ENCODE measurements at regions of chr13 and their contacts with region 1.

Region 1: DNA sequence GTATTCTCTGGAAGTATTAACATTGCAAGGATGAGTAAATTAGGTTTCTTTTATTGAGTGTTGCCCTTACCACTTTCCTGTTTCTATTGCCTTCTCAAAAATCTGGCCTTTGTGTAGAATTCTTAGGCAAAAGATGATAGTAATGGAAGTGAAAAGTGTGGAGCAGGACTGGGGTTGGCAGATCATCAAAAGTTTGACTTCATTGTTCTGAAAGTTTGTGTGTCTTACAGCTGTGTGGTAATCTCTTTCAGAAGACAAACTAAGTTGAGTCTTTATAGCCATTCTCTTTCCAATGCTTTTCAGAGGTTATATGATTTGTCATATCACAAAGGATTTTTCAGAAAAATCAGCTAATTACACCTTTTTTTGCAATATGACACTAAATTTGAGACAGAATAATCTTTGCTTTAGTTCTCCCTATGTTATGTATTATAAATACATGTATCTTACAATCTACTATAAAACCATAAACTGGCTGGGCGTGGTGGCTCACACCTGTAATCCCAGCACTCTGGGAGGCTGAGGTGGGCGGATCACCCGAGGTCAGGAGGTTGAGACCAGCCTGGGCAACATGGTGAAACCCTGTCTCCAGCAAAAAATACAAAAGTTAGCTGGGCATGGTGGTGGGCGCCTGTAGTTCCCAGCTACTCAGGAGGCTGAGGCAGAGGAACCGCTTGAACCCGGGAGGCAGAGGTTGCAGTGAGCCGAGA is 8.7 kb upstream of the KCNRG start:
- DNase-seq: no peak
- ATAC-seq: no peak
- H3K4me3 ChIP-seq: no peak overlapping the region
- H3K27ac ChIP-seq: peak overlapping the region in 1 of 4 donors; percentile 27
- H3K4me1 ChIP-seq: peaks cover 18 to 21% of the 10 kb centered on the region in 2 donors
- H3K27me3 ChIP-seq: no peaks in the 10 kb centered on the region
- CTCF ChIP-seq: no peak
- POLR2A ChIP-seq: no peak

Region 2: GRCh38 chr13:49936085-49936940 is 70.3 kb before region 1 on chr13 and contains the start of gene SPRYD7:
- in situ Hi-C with region 1: no loop called
- intact Hi-C with region 1: no loop called
- DNase-seq: peak; percentile 96 to 98
- ATAC-seq: peak; percentile 92 to 93
- H3K4me3 ChIP-seq: peak within 1 kb of the TSS; percentile 80 to 98 (median 88)
- H3K27ac ChIP-seq: peak within 1 kb of the TSS; percentile 87 to 95 (median 92)
- H3K4me1 ChIP-seq: peaks cover 49 to 54% of the 10 kb centered on the region in 2 donors
- H3K27me3 ChIP-seq: no peaks in the 10 kb centered on the region
- CTCF ChIP-seq: peak; percentile 88 to 95 (median 93)
- POLR2A ChIP-seq: peak; percentile 77 to 83
- total RNA-seq, gene SPRYD7: 9.8 to 24.7 (median 17.9) TPM

Region 3: DNA sequence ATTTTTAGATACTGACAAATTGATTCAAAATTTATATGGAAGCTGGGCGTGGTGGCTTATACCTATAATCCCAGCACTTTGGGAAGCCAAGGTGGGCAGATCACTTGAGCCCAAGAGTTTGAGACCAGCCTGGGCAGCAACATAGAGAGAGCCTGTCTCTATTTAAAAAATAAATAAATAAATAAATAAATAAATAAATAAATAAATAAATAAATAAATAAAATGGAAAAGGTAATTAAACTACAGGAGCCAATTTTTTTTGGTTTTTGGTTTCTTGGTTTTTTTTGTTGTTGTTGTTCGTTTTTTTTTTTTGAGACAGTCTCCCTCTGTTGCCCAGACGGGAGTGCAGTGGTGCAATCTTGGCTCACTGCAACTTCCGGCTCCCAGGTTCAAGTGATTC is 39.1 kb before region 1 on chr13:
- in situ Hi-C with region 1: no loop called
- intact Hi-C with region 1: no loop called
- DNase-seq: no peak
- ATAC-seq: no peak
- H3K4me3 ChIP-seq: no peak overlapping the region
- H3K27ac ChIP-seq: no peak overlapping the region
- H3K4me1 ChIP-seq: no peaks in the 10 kb centered on the region
- H3K27me3 ChIP-seq: no peaks in the 10 kb centered on the region
- CTCF ChIP-seq: no peak
- POLR2A ChIP-seq: no peak

Region 4: GRCh38 chr13:50075619-50076097 is 69.1 kb after region 1 on chr13:
- in situ Hi-C with region 1: loop called in 1 of 4 experiments (anchors 10 kb)
- intact Hi-C with region 1: no loop called
- DNase-seq: no peak
- ATAC-seq: no peak
- H3K4me3 ChIP-seq: no peak overlapping the region
- H3K27ac ChIP-seq: peak overlapping the region in 1 of 4 donors; percentile 20
- H3K4me1 ChIP-seq: peaks cover 43 to 49% of the 10 kb centered on the region in 2 donors
- H3K27me3 ChIP-seq: no peaks in the 10 kb centered on the region
- CTCF ChIP-seq: no peak
- POLR2A ChIP-seq: no peak

Region 5: DNA sequence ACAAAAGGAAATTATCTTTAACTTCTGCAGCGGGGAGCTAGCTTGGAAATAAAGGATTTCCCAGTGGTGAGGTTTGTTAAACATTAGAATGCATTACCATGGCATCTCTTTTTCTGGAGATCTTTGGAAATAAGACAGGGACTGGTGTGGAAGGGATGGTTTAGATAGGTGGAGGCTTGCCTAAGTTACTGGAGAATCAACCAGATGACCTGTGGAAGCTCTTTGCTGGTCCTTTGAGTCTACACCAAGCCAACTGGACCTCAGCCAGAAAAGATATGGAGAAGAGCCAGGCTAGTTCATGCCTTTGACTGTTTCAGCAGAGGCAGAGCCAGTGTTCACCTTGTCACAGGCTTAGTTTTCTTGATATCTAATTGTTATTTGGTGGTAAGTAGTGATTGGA is 143.4 kb after region 1 on chr13:
- in situ Hi-C with region 1: no loop called
- intact Hi-C with region 1: no loop called
- DNase-seq: no peak
- ATAC-seq: no peak
- H3K4me3 ChIP-seq: no peak overlapping the region
- H3K27ac ChIP-seq: no peak overlapping the region
- H3K4me1 ChIP-seq: peaks cover 0 to 8% of the 10 kb centered on the region in 2 donors
- H3K27me3 ChIP-seq: no peaks in the 10 kb centered on the region
- CTCF ChIP-seq: no peak
- POLR2A ChIP-seq: no peak

Measured in gastrocnemius medialis (tissue), 4 donors.